PC-9 (cell line): ENCODE measurements at regions of chr3 and their contacts with region 1.

Region 1: DNA sequence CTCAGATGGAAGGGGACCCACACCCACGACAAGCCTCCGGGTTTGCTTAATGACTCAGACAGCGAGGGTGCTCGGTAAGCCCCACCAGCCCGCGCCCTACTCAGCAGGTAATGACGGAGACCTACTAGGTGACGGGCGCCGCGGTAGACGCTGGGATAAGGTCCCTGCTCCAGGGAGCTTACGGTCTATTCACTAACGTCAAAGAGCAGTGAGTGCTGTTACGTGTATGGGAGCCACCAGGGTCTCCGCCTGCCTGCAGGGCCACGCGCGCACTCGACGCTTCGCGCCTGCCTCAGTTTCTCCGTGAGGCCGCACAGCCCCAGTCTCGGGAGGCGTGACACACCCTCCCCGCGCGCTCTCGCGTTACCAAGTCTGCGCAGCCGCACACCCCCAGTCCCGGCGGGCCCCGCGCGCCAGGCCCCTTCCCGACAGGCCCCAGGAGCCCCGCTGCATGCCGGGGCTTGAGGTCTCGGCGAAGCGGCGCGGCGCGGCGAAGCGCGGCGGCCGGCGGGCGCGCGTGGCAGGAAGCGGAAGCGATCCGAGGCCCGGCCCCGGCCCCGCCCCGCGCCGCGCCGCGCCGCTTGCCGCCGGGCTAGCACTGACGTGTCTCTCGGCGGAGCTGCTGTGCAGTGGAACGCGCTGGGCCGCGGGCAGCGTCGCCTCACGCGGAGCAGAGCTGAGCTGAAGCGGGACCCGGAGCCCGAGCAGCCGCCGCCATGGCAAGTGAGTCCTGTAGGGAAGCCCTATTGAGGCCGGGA is at the start of gene SEC61A1:
- DNase-seq: peak; percentile 78 to 98
- H3K4me3 ChIP-seq: peak within 1 kb of the TSS; percentile 99
- H3K27ac ChIP-seq: peak within 1 kb of the TSS; percentile 81
- H3K4me1 ChIP-seq: peaks cover 26% of the 10 kb centered on the region
- H3K27me3 ChIP-seq: no peaks in the 10 kb centered on the region
- CTCF ChIP-seq: no peak
- total RNA-seq, gene SEC61A1: 110 and 189 TPM in 2 replicates

Region 2: GRCh38 chr3:128011140-128011539 is 40.9 kb before region 1 on chr3:
- CTCF ChIA-PET with region 1: no interaction called
- POLR2A ChIA-PET with region 1: no interaction called
- intact Hi-C with region 1: loop called (anchors 2 kb)
- DNase-seq: peak; percentile 56 to 82
- H3K4me3 ChIP-seq: no peak overlapping the region
- H3K27ac ChIP-seq: no peak overlapping the region
- H3K4me1 ChIP-seq: no peaks in the 10 kb centered on the region; the same call in 1 of the 2 replicates
- H3K27me3 ChIP-seq: no peaks in the 10 kb centered on the region
- CTCF ChIP-seq: peak; percentile 58

Region 3: DNA sequence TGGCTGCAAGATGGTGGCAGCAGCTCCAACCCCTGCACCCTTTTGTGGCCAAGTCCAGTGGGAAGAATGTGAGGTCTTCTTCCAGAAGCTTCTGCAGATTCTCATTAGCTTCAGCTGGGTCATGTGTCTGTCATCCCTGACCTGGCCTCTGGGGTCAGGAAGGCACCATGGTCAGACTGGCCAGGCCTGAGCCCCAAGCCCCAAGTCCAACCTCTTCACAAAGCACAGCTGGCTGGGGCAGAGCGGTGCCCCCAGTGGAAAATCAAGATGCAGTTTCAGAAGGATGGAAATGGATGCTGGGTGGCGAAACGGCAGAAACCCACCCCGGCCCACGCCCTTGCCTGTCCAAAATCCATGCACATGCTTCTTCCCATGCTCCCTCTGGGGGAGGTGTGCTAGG is 456.8 kb after region 1 on chr3:
- CTCF ChIA-PET with region 1: no interaction called
- POLR2A ChIA-PET with region 1: no interaction called
- intact Hi-C with region 1: no loop called
- DNase-seq: no peak
- H3K4me3 ChIP-seq: no peak overlapping the region
- H3K27ac ChIP-seq: no peak overlapping the region
- H3K4me1 ChIP-seq: peaks cover 19% of the 10 kb centered on the region
- H3K27me3 ChIP-seq: no peaks in the 10 kb centered on the region
- CTCF ChIP-seq: no peak